ENCODE measurements at regions of chr4 and their contacts with region 1.

Region 1: DNA sequence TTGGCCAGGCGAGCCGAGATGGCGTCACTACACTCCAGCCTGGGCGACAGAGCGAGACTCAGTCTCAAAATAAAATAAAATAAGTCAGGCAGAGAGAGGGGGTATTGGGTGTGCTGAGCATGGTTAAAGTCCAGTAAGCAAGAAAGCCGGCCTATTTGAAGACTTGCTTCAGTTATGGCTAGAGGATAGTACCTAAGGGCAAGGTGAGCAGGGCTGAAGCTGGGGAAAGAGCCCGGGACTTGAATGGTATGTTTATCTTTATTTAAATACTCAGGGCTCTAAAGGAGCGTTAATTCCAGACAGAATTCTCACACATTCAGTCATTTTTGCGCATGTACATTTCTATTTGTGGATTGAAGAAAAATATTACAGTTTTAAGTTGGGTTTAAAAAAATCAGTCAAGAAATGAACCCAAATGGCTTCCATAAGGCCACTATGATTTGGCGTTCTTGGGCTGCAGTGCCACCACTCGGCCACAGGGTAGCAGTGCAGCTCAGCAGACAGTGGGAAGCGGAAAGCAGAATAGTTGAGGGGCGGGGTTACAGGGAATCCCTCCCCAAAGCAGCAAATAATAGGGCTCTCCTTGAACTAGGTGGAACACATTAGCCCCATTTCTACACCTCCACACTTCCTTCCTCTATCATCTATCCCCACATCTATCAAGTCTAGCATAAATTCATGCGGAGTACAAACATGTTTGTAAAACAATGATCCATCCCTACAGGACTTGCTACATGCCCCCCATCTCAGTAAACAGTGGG is 37.2 kb upstream of the SH3D19 start:
- DNase-seq: peak; percentile 75
- H3K4me3 ChIP-seq: no peak overlapping the region
- H3K27ac ChIP-seq: no peak overlapping the region
- H3K4me1 ChIP-seq: no peaks in the 10 kb centered on the region
- H3K27me3 ChIP-seq: no peaks in the 10 kb centered on the region
- CTCF ChIP-seq: peak; percentile 99 to 100

Region 2: DNA sequence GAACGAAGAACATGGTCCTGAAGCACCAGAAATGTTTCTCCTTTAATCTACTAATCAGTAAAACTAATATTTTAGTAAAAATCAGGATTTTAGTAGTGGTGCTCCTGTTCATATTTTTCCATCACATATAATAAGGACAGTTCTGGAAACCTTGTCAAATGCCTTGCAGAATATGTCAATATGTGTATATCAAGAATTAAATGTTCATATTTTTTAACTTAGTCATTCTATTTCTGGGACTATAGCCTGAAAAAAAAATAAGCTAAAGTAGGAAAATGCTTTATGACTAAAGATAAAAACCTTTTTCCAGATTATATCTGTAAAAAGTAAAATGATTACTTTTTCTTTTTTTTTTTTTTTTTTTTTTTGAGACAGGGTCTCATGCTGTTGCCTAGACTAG is 715.6 kb before region 1 on chr4:
- CTCF ChIA-PET with region 1: no interaction called
- dilution Hi-C with region 1: no loop called
- in situ Hi-C with region 1: no loop called
- intact Hi-C with region 1: no loop called
- DNase-seq: no peak
- H3K4me3 ChIP-seq: no peak overlapping the region
- H3K27ac ChIP-seq: no peak overlapping the region
- H3K4me1 ChIP-seq: no peaks in the 10 kb centered on the region
- H3K27me3 ChIP-seq: no peaks in the 10 kb centered on the region
- CTCF ChIP-seq: no peak

Region 3: DNA sequence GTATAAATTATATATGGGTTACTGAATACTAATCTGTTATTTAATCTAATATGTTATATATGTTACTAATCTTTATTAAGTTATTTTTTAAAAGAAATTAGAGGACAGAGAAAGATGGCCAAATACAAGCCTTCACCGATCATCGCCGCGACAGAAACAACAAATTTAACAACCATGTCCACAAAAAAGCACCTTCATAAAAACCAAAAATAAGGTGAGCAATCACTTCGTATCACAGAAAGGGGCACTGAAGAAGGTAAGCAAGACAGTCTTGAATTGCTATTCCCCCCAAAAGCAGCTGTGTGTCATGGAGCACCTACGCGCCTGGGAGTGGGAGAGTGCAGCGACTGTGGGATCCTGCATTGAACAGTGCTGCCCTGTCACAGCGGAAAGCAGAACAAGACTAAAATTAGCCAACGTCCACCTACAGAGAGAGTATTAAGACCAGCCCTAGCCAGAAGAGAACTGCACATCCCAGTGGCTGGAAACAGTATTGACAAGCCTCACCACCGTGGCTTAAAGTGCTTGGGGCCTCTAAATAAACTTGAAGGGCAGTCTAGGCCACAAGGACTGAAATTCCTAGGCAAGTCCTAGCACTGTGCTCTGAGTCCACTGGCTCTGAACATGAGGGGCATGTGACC is 386.0 kb before region 1 on chr4:
- CTCF ChIA-PET with region 1: no interaction called
- dilution Hi-C with region 1: no loop called
- in situ Hi-C with region 1: no loop called
- intact Hi-C with region 1: no loop called
- DNase-seq: no peak
- H3K4me3 ChIP-seq: no peak overlapping the region
- H3K27ac ChIP-seq: no peak overlapping the region
- H3K4me1 ChIP-seq: no peaks in the 10 kb centered on the region
- H3K27me3 ChIP-seq: no peaks in the 10 kb centered on the region
- CTCF ChIP-seq: no peak

Region 4: GRCh38 chr4:151147000-151147399 is 215.6 kb before region 1 on chr4:
- CTCF ChIA-PET with region 1: no interaction called
- dilution Hi-C with region 1: no loop called
- in situ Hi-C with region 1: loop called in 1 of 2 experiments (anchors 25 kb)
- intact Hi-C with region 1: no loop called
- DNase-seq: no peak
- H3K4me3 ChIP-seq: no peak overlapping the region
- H3K27ac ChIP-seq: no peak overlapping the region
- H3K4me1 ChIP-seq: no peaks in the 10 kb centered on the region
- H3K27me3 ChIP-seq: no peaks in the 10 kb centered on the region
- CTCF ChIP-seq: no peak

Region 5: DNA sequence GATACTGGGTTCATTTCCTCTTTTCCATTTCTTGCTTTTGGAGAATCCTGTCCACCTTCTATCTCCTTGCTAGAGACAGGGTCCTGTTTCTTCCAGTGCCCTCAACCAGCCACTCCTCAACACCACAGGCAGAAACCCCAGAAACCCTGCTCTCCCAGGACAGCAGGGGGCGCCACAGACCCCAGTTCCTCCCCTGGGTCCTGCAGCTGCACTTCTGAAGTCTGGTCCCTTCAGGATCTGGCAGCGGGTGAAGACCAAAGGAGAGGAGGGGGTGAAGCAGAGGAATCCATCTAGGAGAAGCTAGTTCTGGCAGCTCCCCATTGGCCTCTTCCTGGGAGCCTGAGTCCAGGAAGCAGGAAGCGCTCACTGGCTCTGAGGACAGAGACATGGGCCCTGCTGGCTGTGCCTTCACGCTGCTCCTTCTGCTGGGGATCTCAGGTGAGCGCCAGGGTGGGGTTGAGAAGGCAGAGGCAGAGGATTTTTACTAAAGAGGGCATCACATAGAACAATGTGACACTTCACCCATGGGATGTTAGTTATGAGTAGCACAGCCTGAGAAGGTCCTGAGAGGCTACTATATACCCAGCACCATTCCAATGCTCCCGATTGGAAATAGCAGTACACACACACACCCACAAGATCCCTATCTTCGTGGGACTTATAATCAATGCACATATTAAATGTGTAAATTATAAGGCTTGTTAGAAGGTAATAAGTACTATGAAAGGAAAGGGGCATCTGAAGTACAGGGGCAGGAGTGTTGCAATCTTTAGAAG is 85.6 kb before region 1 on chr4 and contains the start of gene PRSS48:
- CTCF ChIA-PET with region 1: interaction called, 4 read pairs
- dilution Hi-C with region 1: no loop called
- in situ Hi-C with region 1: loop called in 1 of 2 experiments (anchors 5 kb)
- intact Hi-C with region 1: loop called (anchors 1 kb)
- DNase-seq: peak; percentile 42
- H3K4me3 ChIP-seq: no peak within 1 kb of the TSS
- H3K27ac ChIP-seq: no peak within 1 kb of the TSS
- H3K4me1 ChIP-seq: no peaks in the 10 kb centered on the region
- H3K27me3 ChIP-seq: no peaks in the 10 kb centered on the region
- CTCF ChIP-seq: peak; percentile 65 to 92
- total RNA-seq, gene PRSS48: 0.17 TPM in 1 of 2 donors, not detected in the other

Region 6: GRCh38 chr4:151408630-151409469 is 46.3 kb after region 1 on chr4 and contains the start of gene FHIP1A:
- CTCF ChIA-PET with region 1: no interaction called
- dilution Hi-C with region 1: no loop called
- in situ Hi-C with region 1: no loop called
- intact Hi-C with region 1: loop called (anchors 2 kb)
- DNase-seq: peak; percentile 95
- H3K4me3 ChIP-seq: peak within 1 kb of the TSS; percentile 82 to 97 (median 85)
- H3K27ac ChIP-seq: peak within 1 kb of the TSS; percentile 97
- H3K4me1 ChIP-seq: peaks cover 31% of the 10 kb centered on the region
- H3K27me3 ChIP-seq: no peaks in the 10 kb centered on the region
- CTCF ChIP-seq: peak in 1 of 2 donors; percentile 10
- total RNA-seq, gene FHIP1A: 33.0 to 38.5 TPM

Region 7: GRCh38 chr4:151604238-151604637 is 241.7 kb after region 1 on chr4:
- CTCF ChIA-PET with region 1: interaction called, 3 read pairs
- dilution Hi-C with region 1: no loop called
- in situ Hi-C with region 1: no loop called
- intact Hi-C with region 1: loop called (anchors 2 kb)
- DNase-seq: no peak
- H3K4me3 ChIP-seq: no peak overlapping the region
- H3K27ac ChIP-seq: no peak overlapping the region
- H3K4me1 ChIP-seq: peaks cover 9% of the 10 kb centered on the region
- H3K27me3 ChIP-seq: no peaks in the 10 kb centered on the region
- CTCF ChIP-seq: peak; percentile 43 to 48

Measured in mammary epithelial cell (primary cell).